Aorta (tissue), 5 donors: ENCODE measurements at regions of chr16 and their contacts with region 1.

Region 1: DNA sequence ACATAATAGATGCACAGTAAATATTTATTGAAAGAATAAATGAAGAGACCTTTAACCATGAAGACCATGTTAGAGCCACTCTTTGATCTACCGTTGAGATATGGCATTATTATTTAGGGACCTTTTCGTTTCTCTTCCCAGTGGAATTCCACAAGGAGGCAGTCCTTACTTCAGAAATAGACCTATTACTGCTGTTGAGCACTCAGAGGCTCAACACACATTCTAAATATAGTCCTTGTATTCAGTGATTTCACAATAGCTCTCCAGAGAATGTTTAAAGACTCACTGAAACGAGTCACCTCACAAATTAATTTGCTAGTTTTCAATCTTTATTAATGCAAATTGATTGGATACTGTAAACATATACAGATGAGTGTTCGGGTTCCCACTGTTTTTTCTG is 603.8 kb downstream of the CDH8 start:
- DNase-seq: no peak
- ATAC-seq: no peak
- H3K4me3 ChIP-seq: no peak overlapping the region
- H3K27ac ChIP-seq: no peak overlapping the region
- H3K4me1 ChIP-seq: no peaks in the 10 kb centered on the region
- H3K27me3 ChIP-seq: no peaks in the 10 kb centered on the region

Region 2: GRCh38 chr16:62036101-62036801 is 603.8 kb after region 1 on chr16 and contains the start of gene CDH8:
- intact Hi-C with region 1: loop called in 1 of 2 experiments (anchors 10 kb)
- DNase-seq: peak; percentile 45 to 82
- ATAC-seq: peak; percentile 54
- H3K4me3 ChIP-seq: peak within 1 kb of the TSS; percentile 52 to 61
- H3K27ac ChIP-seq: no peak within 1 kb of the TSS
- H3K4me1 ChIP-seq: peaks cover 0 to 4% of the 10 kb centered on the region in 2 donors
- H3K27me3 ChIP-seq: no peaks in the 10 kb centered on the region
- total RNA-seq, gene CDH8: 4.1 to 15.4 TPM